ENCODE measurements at regions of chr12 and their contacts with region 1.

Region 1: GRCh38 chr12:22018860-22019259 is 27.2 kb upstream of the CMAS start:
- DNase-seq: no peak
- ATAC-seq: no peak
- H3K4me3 ChIP-seq: no peak overlapping the region
- H3K27ac ChIP-seq: no peak overlapping the region
- H3K4me1 ChIP-seq: no peaks in the 10 kb centered on the region
- H3K27me3 ChIP-seq: no peaks in the 10 kb centered on the region
- CTCF ChIP-seq: peak; percentile 22; the same call in 1 of the 2 replicates

Region 2: DNA sequence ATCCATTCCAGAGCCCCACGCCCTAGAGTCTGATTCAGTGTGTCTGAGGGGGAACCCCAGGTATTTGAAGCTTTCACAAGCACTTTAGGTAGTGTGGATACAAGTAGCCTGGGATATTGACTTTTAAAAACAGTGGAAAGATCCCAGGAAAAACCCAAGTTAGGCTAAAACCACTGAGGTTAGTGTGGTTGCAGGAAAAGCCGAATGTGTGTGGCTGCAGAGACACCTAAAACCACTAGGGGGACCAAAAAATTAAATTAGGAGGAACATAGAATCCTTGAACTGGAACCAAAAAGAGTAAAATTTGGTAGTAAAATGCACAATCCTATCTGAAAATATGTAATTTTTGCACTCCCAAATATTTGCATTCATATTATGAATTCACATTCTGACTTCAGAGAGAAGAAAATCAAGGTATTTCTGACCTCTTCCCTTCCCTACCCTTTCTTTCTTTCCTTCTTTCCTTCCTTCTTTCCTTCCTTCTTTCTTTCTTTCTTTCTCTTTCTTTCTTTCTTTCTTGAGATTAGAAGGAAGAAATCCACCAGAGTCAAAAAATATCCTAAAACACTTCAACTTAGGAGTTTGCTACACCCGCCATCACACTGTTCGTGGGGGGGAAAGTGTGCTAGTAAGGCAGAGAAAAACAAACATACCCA is 722.0 kb before region 1 on chr12:
- CTCF ChIA-PET with region 1: no interaction called
- POLR2A ChIA-PET with region 1: no interaction called
- in situ Hi-C with region 1: no loop called
- intact Hi-C with region 1: no loop called
- DNase-seq: no peak
- ATAC-seq: no peak
- H3K4me3 ChIP-seq: no peak overlapping the region
- H3K27ac ChIP-seq: no peak overlapping the region
- H3K4me1 ChIP-seq: no peaks in the 10 kb centered on the region
- H3K27me3 ChIP-seq: no peaks in the 10 kb centered on the region
- CTCF ChIP-seq: peak; percentile 68

Region 3: GRCh38 chr12:21865846-21866245 is 153.0 kb before region 1 on chr12:
- CTCF ChIA-PET with region 1: no interaction called
- POLR2A ChIA-PET with region 1: interaction called, 10 read pairs
- in situ Hi-C with region 1: no loop called
- intact Hi-C with region 1: no loop called
- DNase-seq: no peak
- ATAC-seq: no peak
- H3K4me3 ChIP-seq: no peak overlapping the region
- H3K27ac ChIP-seq: no peak overlapping the region
- H3K4me1 ChIP-seq: no peaks in the 10 kb centered on the region
- H3K27me3 ChIP-seq: no peaks in the 10 kb centered on the region
- CTCF ChIP-seq: no peak

Region 4: DNA sequence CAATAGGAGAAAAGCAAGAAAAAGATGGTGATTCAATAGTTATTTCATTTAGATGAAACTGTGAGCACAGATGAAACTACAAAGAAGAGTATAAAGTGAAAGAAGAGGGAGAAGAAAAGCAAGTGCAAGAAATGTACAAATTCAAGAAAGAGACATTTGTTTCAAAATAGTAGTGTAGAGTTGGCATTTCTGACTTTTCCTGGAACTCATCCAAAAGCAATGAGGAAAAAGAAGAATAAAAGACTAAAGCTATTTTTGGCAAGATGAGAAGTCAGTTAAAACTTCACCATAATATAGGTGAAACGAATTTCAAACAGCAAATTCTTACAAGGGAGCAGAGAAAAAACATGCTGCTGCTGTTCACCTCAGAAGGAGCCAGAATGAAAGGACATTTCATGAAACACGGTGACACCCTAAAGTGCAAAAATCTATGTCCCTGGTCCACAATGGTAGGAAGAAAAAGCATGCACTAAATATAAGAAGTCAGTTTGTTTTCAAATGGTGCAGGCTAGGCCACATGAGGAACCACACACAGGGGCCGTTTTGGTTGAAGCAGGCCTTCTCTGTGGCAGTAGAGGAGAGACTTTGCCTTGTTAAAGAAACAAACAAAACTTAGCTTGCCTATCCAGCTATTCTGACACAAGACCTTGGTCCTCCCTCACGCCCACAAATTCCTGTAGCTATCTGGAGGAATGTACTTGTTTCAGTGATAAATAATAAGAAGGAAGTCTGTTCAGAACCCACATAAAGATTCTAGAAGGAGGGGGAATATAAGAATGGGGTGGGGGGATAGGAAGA is 16.0 kb after region 1 on chr12:
- CTCF ChIA-PET with region 1: no interaction called
- POLR2A ChIA-PET with region 1: no interaction called
- in situ Hi-C with region 1: no loop called
- intact Hi-C with region 1: no loop called
- DNase-seq: no peak
- ATAC-seq: no peak
- H3K4me3 ChIP-seq: no peak overlapping the region
- H3K27ac ChIP-seq: no peak overlapping the region
- H3K4me1 ChIP-seq: no peaks in the 10 kb centered on the region
- H3K27me3 ChIP-seq: no peaks in the 10 kb centered on the region
- CTCF ChIP-seq: no peak